ENCODE measurements at regions of chr1 and their contacts with region 1.

Region 1: GRCh38 chr1:66253330-66253921 is 280.5 kb upstream of the SGIP1 start:
- DNase-seq: no peak
- ATAC-seq: peak; percentile 95
- H3K4me3 Mint-ChIP-seq: no peak overlapping the region
- H3K27ac Mint-ChIP-seq: peak overlapping the region; percentile 82
- H3K4me1 Mint-ChIP-seq: peaks cover 28% of the 10 kb centered on the region
- H3K27me3 Mint-ChIP-seq: no peaks in the 10 kb centered on the region
- CTCF ChIP-seq: peak; percentile 34

Region 2: DNA sequence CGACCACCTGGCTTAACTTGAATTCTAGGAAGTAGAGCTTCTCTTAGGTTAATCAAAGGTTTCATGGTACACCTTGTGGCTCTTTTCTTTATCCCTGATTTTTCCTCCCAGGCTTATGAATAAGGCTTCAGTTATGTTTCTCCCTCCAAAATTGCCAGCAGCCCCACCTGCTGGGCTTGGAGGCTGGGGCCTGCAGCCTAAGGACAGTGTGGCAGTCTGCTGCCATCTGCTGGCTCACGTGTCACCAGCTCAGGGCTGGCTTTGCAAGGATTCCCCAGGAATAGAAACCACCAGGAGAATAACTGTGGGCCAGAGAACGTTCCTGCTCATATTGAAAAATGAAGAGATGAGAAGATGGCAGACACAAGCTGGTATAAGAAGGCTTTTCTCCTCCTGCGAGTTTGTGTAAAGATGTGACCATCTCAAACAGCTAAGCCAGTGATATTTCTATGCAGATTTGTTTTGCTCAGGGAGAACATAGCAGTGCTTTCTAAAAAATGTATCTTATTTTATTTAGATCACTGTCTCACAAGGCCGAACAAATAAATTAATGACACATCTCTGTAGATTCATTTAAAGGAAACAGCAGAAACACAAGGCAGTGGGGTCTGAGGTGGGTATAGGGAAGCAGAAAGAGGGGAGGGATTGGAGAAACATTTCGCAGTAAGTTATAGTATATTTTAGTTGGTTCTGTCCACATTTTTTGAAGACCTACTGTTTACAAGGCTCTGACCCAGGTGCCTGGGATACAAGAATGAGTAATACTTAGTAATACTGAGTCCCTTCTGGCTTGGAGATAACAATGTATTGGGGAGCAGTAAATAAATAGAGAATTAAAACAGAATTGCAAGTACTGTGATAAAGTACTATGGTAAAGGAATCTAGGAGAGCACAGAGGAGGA is 10.5 kb before region 1 on chr1:
- CTCF ChIA-PET with region 1: interaction called, 31 read pairs
- POLR2A ChIA-PET with region 1: no interaction called
- intact Hi-C with region 1: loop called (anchors 1 kb)
- DNase-seq: peak; percentile 46
- ATAC-seq: peak; percentile 92
- H3K4me3 Mint-ChIP-seq: no peak overlapping the region
- H3K27ac Mint-ChIP-seq: no peak overlapping the region
- H3K4me1 Mint-ChIP-seq: peaks cover 8% of the 10 kb centered on the region
- H3K27me3 Mint-ChIP-seq: peaks cover 12% of the 10 kb centered on the region
- CTCF ChIP-seq: no peak

Region 3: DNA sequence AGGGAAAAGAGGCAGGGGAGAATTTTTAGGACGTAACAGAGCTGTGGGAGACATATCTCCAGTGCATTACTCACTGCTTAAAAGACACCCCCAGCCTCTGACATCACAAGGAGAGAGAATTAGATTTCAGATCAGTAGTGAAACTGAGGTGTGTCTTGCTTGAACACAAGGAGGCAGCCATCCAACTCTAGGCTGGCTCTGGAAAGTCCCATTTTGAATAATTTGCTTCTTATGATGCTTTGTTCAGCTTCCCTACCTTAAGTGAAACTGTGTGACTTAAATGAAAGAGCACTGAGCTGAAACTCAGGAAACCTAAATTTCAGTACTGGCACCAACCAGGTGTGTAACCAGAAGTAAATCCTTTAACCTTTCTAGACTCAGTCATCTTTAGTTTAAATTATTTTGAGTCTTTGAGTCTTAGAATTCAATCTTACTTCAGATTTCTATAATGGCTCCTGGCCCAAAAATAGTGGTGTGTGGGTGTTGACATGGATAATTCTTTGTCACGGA is 29.0 kb after region 1 on chr1:
- CTCF ChIA-PET with region 1: interaction called, 20 read pairs
- POLR2A ChIA-PET with region 1: interaction called, 11 read pairs
- intact Hi-C with region 1: loop called (anchors 1 kb)
- DNase-seq: no peak
- ATAC-seq: peak; percentile 82
- H3K4me3 Mint-ChIP-seq: peak overlapping the region; percentile 75
- H3K27ac Mint-ChIP-seq: peak overlapping the region; percentile 98
- H3K4me1 Mint-ChIP-seq: peaks cover 91% of the 10 kb centered on the region
- H3K27me3 Mint-ChIP-seq: no peaks in the 10 kb centered on the region
- CTCF ChIP-seq: no peak

Region 4: GRCh38 chr1:66380452-66381212 is 127.2 kb after region 1 on chr1:
- CTCF ChIA-PET with region 1: interaction called, 5 read pairs
- POLR2A ChIA-PET with region 1: interaction called, 6 read pairs
- intact Hi-C with region 1: loop called (anchors 1 kb)
- DNase-seq: peak; percentile 59
- ATAC-seq: peak; percentile 98
- H3K4me3 Mint-ChIP-seq: peak overlapping the region; percentile 72
- H3K27ac Mint-ChIP-seq: peak overlapping the region; percentile 92
- H3K4me1 Mint-ChIP-seq: peaks cover 87% of the 10 kb centered on the region
- H3K27me3 Mint-ChIP-seq: no peaks in the 10 kb centered on the region
- CTCF ChIP-seq: no peak

Region 5: GRCh38 chr1:66503841-66504470 is 250.5 kb after region 1 on chr1:
- CTCF ChIA-PET with region 1: interaction called, 5 read pairs
- POLR2A ChIA-PET with region 1: no interaction called
- intact Hi-C with region 1: loop called (anchors 1 kb)
- DNase-seq: no peak
- ATAC-seq: no peak
- H3K4me3 Mint-ChIP-seq: no peak overlapping the region
- H3K27ac Mint-ChIP-seq: no peak overlapping the region
- H3K4me1 Mint-ChIP-seq: no peaks in the 10 kb centered on the region
- H3K27me3 Mint-ChIP-seq: peaks cover 15% of the 10 kb centered on the region
- CTCF ChIP-seq: no peak